ENCODE measurements at regions of chr16 and their contacts with region 1.

Region 1: GRCh38 chr16:84116720-84117493 is at the start of gene MBTPS1:
- DNase-seq: peak; percentile 99 to 100
- H3K4me3 ChIP-seq: peak within 1 kb of the TSS; percentile 62
- H3K4me3 Mint-ChIP-seq: peak within 1 kb of the TSS; percentile 92
- H3K27ac Mint-ChIP-seq: peak within 1 kb of the TSS; percentile 96
- H3K4me1 ChIP-seq: no peaks in the 10 kb centered on the region
- H3K4me1 Mint-ChIP-seq: no peaks in the 10 kb centered on the region
- H3K27me3 ChIP-seq: no peaks in the 10 kb centered on the region
- H3K27me3 Mint-ChIP-seq: no peaks in the 10 kb centered on the region
- CTCF ChIP-seq: no peak
- total RNA-seq, gene MBTPS1: 93.2 and 96.4 TPM in 2 replicates

Region 2: GRCh38 chr16:84013787-84014569 is 102.9 kb before region 1 on chr16:
- CTCF ChIA-PET with region 1: no interaction called
- POLR2A ChIA-PET with region 1: no interaction called
- intact Hi-C with region 1: no loop called
- DNase-seq: peak; percentile 79 to 92
- H3K4me3 ChIP-seq: no peak overlapping the region
- H3K4me3 Mint-ChIP-seq: no peak overlapping the region
- H3K27ac Mint-ChIP-seq: no peak overlapping the region
- H3K4me1 ChIP-seq: no peaks in the 10 kb centered on the region
- H3K4me1 Mint-ChIP-seq: no peaks in the 10 kb centered on the region
- H3K27me3 ChIP-seq: no peaks in the 10 kb centered on the region
- H3K27me3 Mint-ChIP-seq: no peaks in the 10 kb centered on the region
- CTCF ChIP-seq: no peak

Region 3: GRCh38 chr16:84096115-84097012 is 20.5 kb before region 1 on chr16:
- CTCF ChIA-PET with region 1: no interaction called
- POLR2A ChIA-PET with region 1: interaction called, 8 read pairs
- intact Hi-C with region 1: loop called (anchors 1 kb)
- DNase-seq: peak; percentile 74 to 79
- H3K4me3 ChIP-seq: no peak overlapping the region
- H3K4me3 Mint-ChIP-seq: no peak overlapping the region
- H3K27ac Mint-ChIP-seq: peak overlapping the region; percentile 65
- H3K4me1 ChIP-seq: peaks cover 19% of the 10 kb centered on the region
- H3K4me1 Mint-ChIP-seq: peaks cover 6% of the 10 kb centered on the region
- H3K27me3 ChIP-seq: no peaks in the 10 kb centered on the region
- H3K27me3 Mint-ChIP-seq: no peaks in the 10 kb centered on the region
- CTCF ChIP-seq: no peak

Region 4: GRCh38 chr16:84175350-84176081 is 58.6 kb after region 1 on chr16:
- CTCF ChIA-PET with region 1: interaction called, 4 read pairs
- POLR2A ChIA-PET with region 1: no interaction called
- intact Hi-C with region 1: loop called (anchors 2 kb)
- DNase-seq: peak; percentile 70 to 80
- H3K4me3 ChIP-seq: no peak overlapping the region
- H3K4me3 Mint-ChIP-seq: no peak overlapping the region
- H3K27ac Mint-ChIP-seq: peak overlapping the region; percentile 36
- H3K4me1 ChIP-seq: peaks cover 16% of the 10 kb centered on the region
- H3K4me1 Mint-ChIP-seq: no peaks in the 10 kb centered on the region
- H3K27me3 ChIP-seq: no peaks in the 10 kb centered on the region
- H3K27me3 Mint-ChIP-seq: no peaks in the 10 kb centered on the region
- CTCF ChIP-seq: peak; percentile 67 to 69

Region 5: GRCh38 chr16:84308120-84308519 is 191.2 kb after region 1 on chr16:
- CTCF ChIA-PET with region 1: interaction called, 11 read pairs
- POLR2A ChIA-PET with region 1: no interaction called
- intact Hi-C with region 1: no loop called
- DNase-seq: peak; percentile 54 to 74
- H3K4me3 ChIP-seq: no peak overlapping the region
- H3K4me3 Mint-ChIP-seq: no peak overlapping the region
- H3K27ac Mint-ChIP-seq: no peak overlapping the region
- H3K4me1 ChIP-seq: peaks cover 6% of the 10 kb centered on the region; the same call in 1 of the 2 replicates
- H3K4me1 Mint-ChIP-seq: no peaks in the 10 kb centered on the region
- H3K27me3 ChIP-seq: no peaks in the 10 kb centered on the region
- H3K27me3 Mint-ChIP-seq: peaks cover 2% of the 10 kb centered on the region
- CTCF ChIP-seq: peak; percentile 62 to 81

Measured in Caco-2 (cell line).